Posterior vena cava (tissue), 2 donors: ENCODE measurements at regions of chr9 and their contacts with region 1.

Region 1: DNA sequence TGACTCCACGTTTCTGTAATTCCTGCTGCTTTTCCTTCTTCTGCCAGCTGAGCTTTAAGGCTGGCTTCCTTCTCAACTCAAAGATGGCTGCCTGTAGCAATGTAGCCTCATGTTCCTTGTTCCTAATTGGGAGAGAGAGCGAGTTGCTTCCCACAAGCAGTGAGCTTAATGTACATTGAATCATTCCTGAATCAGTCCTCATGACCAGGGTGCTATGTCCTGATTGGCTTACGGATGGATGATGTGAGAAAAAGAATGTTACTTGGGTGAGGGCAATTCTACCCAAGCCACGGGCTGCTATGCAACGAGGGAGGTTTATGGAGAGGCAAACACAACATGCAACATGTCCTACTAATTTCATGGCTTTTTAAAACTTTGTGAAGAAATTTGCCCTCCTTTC is 356.2 kb downstream of the RASEF start:
- DNase-seq: no peak

Region 2: GRCh38 chr9:82320566-82320965 is 386.2 kb before region 1 on chr9:
- intact Hi-C with region 1: no loop called
- DNase-seq: no peak

Region 3: DNA sequence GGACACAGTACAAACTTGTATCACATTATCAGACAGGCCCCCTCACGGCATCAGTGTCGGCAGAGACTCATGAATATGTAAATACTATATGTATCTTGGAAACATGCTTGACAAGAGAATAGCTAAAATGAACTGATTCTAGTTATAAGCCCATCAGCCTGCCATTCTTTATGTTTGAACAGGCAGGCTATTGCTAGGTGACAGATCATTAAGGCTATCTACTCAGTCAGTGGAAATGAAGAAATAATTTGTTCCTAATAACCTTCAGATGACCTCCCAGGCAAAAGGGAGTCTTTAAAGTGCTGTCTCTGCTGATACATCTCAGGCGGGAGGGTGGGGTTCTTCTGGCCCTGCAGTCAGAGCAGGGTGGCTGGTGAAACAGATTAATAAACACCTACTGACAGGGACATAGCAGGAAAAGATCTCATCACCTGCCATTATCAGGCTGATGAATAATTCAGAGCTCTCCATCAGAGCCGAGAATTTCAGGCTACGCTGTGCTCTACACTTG is 38.0 kb before region 1 on chr9:
- intact Hi-C with region 1: loop called in 1 of 2 experiments (anchors 1 kb)
- DNase-seq: no peak

Region 4: DNA sequence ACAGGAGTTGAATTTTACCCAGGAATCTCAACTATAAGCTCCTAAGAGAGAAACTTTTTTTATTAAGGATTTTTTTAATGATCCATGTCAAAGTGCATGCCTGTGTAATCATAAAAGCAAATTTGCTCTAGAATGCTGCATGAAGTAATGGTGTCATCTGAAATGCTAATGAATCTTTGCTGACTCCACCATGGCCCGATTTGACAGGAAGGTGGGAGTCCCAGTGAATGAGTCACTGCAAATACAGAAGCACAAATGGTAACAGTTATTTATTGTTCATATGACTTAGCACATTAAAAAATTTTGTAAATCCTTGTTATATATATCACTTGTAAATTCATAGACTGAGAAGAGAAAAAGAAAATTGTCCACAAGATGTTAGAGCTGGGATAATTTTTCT is 14.8 kb after region 1 on chr9:
- intact Hi-C with region 1: no loop called
- DNase-seq: no peak

Region 5: DNA sequence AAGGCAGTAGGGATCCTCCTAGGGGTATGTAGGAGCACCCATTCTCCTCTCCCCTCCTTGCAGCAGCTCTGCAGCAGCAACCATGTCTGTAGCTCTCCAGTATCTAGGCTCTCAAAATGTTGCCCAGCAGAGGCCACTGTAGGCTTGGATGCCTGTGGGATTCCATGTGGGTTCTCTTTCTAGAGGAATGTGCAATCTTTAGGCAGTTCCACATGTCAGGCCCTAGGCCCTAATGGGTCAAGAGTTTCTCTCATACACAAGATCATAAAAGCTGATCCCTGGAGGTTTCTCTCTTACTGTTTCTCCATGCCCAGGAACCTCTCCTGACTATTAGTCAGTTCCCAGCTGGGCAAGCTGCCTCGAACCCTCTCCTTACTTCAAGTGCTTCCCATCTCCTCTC is 615.7 kb after region 1 on chr9:
- intact Hi-C with region 1: loop called in 1 of 2 experiments (anchors 5 kb)
- DNase-seq: no peak